Right ventricle myocardium inferior (tissue), 1 donor: ENCODE measurements at regions of chr10 and their contacts with region 1.

Region 1: GRCh38 chr10:102752934-102753664 is 9.4 kb downstream of the WBP1L start:
- DNase-seq: no peak
- ATAC-seq: peak; percentile 70

Region 2: GRCh38 chr10:102815790-102816549 is 62.9 kb after region 1 on chr10:
- intact Hi-C with region 1: loop called (anchors 5 kb)
- DNase-seq: peak; percentile 81
- ATAC-seq: peak; percentile 65